Adrenal gland (tissue), 19 donors: ENCODE measurements at regions of chr21 and their contacts with region 1.

Region 1: DNA sequence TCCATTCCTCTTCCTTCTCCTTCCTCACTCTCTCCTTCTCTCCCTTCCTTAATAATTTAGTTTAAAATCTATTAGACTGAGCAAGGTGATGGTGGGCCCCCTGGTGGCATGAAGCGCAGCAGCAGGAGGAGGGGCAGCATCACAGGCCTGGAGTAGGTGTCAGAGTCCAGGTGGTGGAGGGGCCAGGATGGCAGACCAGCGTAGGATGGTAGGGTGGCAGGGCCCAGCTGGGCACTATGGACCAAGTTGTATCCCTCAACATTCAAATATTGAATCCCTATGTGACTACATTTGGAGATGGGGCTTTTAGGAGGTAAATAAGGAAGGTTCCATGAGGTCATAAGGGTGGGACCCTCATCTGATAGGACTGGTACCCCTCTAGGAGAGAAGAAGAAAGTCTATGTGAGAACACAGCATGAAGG is 61.0 kb downstream of the WDR4 start:
- DNase-seq: peak; percentile 59 to 89 (median 72)
- H3K4me3 ChIP-seq: no peak overlapping the region
- H3K27ac ChIP-seq: no peak overlapping the region
- H3K4me1 ChIP-seq: no peaks in the 10 kb centered on the region
- H3K27me3 ChIP-seq: no peaks in the 10 kb centered on the region
- CTCF ChIP-seq: peak; percentile 71 to 93 (median 90)
- POLR2A ChIP-seq: no peak

Region 2: DNA sequence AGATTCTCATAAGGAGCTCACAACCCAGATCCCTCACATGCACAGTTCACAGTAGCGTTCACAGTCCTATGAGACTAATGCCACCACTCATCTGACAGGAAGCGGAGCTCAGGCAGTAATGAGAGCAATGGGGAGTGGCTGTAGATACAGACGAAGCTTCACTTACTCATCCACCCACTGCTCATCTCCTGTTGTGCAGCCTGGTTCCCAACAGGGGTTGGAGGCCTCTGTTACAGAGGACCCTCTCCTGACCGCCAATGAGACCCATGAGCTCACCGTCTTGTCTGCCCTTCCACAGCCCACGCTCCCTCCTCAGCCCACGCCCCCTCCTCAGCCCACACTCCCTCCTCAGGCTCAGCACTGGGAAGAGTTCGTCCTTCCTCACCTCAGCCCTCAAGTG is 361.9 kb before region 1 on chr21:
- intact Hi-C with region 1: no loop called
- DNase-seq: no peak
- H3K4me3 ChIP-seq: no peak overlapping the region
- H3K27ac ChIP-seq: no peak overlapping the region
- H3K4me1 ChIP-seq: no peaks in the 10 kb centered on the region
- H3K27me3 ChIP-seq: no peaks in the 10 kb centered on the region
- CTCF ChIP-seq: no peak
- POLR2A ChIP-seq: no peak

Region 3: GRCh38 chr21:42652527-42653230 is 165.7 kb before region 1 on chr21:
- intact Hi-C with region 1: loop called in 1 of 2 experiments (anchors 5 kb)
- DNase-seq: peak; percentile 63 to 93 (median 91)
- H3K4me3 ChIP-seq: peak overlapping the region in 2 of 4 donors; percentile 61 to 71
- H3K27ac ChIP-seq: peak overlapping the region in 4 of 5 donors; percentile 36 to 74 (median 54)
- H3K4me1 ChIP-seq: peaks cover 9 to 15% of the 10 kb centered on the region in 2 donors
- H3K27me3 ChIP-seq: no peaks in the 10 kb centered on the region
- CTCF ChIP-seq: peak; percentile 52 to 87 (median 78)
- POLR2A ChIP-seq: peak in 1 of 2 donors; percentile 52

Region 4: DNA sequence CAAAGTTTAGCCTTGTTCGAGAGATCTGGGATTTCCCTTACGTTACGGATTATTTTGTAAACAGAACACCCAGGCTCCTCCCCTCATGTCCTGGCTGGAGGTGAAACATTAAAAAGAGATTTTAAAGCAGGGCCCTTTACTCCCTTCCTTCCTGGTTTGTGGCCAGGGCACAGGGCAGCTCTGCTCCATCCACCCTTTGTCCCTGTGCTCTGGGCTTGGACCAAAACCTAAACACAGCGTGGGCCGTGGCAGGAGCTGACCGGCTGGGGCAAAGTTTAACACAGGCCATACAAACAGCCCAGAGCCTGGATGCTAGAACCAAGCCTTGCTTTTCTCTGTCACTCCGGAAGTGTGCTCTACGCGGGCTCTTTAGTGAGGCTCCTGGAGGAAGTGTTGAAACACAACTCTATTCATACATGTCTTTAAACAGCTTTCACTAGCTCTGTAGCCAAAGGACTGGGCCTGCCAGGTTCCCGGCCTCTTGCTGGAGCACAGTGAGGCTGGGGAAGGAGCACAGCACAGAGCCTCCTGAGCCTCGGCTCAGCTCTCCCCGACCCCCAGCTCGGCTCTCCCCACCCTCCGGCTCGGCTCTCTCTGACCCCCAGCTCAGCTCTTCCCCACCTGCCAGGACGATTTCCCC is 80.3 kb before region 1 on chr21:
- intact Hi-C with region 1: no loop called
- DNase-seq: peak in 6 of 7 donors; percentile 6 to 67 (median 36)
- H3K4me3 ChIP-seq: no peak overlapping the region
- H3K27ac ChIP-seq: peak overlapping the region in 3 of 5 donors; percentile 1 to 79 (median 54)
- H3K4me1 ChIP-seq: peaks cover 0 to 14% of the 10 kb centered on the region in 2 donors
- H3K27me3 ChIP-seq: no peaks in the 10 kb centered on the region
- CTCF ChIP-seq: no peak
- POLR2A ChIP-seq: no peak